B cell (primary cell): ENCODE measurements at regions of chr6 and their contacts with region 1.

Region 1: DNA sequence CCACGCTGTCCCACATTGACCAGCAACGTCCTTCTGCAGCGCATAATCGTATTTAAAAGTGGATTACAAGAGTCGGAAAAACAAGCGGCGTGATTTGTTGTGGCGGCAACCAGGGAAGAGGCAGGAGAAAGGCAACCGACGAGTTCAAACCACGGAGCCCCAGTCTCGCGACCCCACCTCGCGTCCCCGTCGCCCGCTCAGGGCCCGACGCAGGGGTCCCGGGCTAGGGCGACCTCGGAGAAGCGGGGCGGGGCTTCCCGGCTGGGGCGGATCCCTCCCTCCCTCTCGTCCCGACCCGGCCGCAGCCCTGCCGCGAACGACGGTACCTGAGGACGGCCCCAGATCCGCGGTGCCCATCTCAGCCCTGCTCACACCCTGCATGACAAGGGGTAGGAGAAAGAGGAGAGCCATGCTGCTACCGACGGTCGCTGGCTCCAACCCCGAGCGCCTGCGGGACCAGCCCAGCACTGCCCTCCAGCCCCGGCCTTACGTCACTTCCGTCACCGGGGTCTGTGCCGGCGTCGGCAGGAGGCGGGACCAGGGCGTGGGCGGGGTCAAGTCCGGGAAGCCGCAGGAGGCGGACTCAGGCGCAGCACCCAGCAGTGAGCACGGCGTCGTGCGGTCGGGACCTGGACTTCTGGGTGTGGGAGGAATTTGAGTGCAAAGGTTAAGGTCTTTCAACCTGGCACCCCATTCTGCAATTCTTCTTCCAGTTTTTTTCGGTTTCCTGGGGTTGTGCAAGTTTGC is at the start of gene IFNGR1:
- DNase-seq: peak; percentile 96
- ATAC-seq: peak; percentile 86
- H3K4me3 ChIP-seq: peak within 1 kb of the TSS; percentile 76 to 99 (median 88)
- H3K4me3 Mint-ChIP-seq: peak within 1 kb of the TSS; percentile 97
- H3K27ac ChIP-seq: peak within 1 kb of the TSS; percentile 95 to 97
- H3K27ac Mint-ChIP-seq: peak within 1 kb of the TSS; percentile 97
- H3K4me1 ChIP-seq: peaks cover 78 to 81% of the 10 kb centered on the region in 2 donors
- H3K4me1 Mint-ChIP-seq: peaks cover 79% of the 10 kb centered on the region
- H3K27me3 ChIP-seq: no peaks in the 10 kb centered on the region
- H3K27me3 Mint-ChIP-seq: no peaks in the 10 kb centered on the region
- CTCF ChIP-seq: no peak
- total RNA-seq, gene IFNGR1: 48.2 and 51.2 TPM in 2 replicates

Region 2: GRCh38 chr6:136526196-136526930 is 692.7 kb before region 1 on chr6:
- CTCF ChIA-PET with region 1: no interaction called
- POLR2A ChIA-PET with region 1: no interaction called
- intact Hi-C with region 1: no loop called
- DNase-seq: peak; percentile 10
- ATAC-seq: peak; percentile 24
- H3K4me3 ChIP-seq: no peak overlapping the region
- H3K4me3 Mint-ChIP-seq: peak overlapping the region; percentile 4
- H3K27ac ChIP-seq: no peak overlapping the region
- H3K27ac Mint-ChIP-seq: no peak overlapping the region
- H3K4me1 ChIP-seq: peaks cover 12 to 13% of the 10 kb centered on the region in 2 donors
- H3K4me1 Mint-ChIP-seq: peaks cover 16% of the 10 kb centered on the region
- H3K27me3 ChIP-seq: peaks cover 0 to 11% (median 4%) of the 10 kb centered on the region in 4 experiments
- H3K27me3 Mint-ChIP-seq: peaks cover 33% of the 10 kb centered on the region
- CTCF ChIP-seq: no peak

Region 3: GRCh38 chr6:137102851-137103492 is 116.1 kb before region 1 on chr6:
- CTCF ChIA-PET with region 1: interaction called, 5 read pairs
- POLR2A ChIA-PET with region 1: interaction called, 13 read pairs
- intact Hi-C with region 1: loop called (anchors 1 kb)
- DNase-seq: peak; percentile 92
- ATAC-seq: peak; percentile 81
- H3K4me3 ChIP-seq: peak overlapping the region in 4 of 5 experiments; percentile 8 to 49 (median 16)
- H3K4me3 Mint-ChIP-seq: peak overlapping the region; percentile 86
- H3K27ac ChIP-seq: peak overlapping the region; percentile 97
- H3K27ac Mint-ChIP-seq: peak overlapping the region; percentile 99
- H3K4me1 ChIP-seq: peaks cover 89 to 91% of the 10 kb centered on the region in 2 donors
- H3K4me1 Mint-ChIP-seq: peaks cover 87% of the 10 kb centered on the region
- H3K27me3 ChIP-seq: no peaks in the 10 kb centered on the region
- H3K27me3 Mint-ChIP-seq: no peaks in the 10 kb centered on the region
- CTCF ChIP-seq: no peak

Region 4: DNA sequence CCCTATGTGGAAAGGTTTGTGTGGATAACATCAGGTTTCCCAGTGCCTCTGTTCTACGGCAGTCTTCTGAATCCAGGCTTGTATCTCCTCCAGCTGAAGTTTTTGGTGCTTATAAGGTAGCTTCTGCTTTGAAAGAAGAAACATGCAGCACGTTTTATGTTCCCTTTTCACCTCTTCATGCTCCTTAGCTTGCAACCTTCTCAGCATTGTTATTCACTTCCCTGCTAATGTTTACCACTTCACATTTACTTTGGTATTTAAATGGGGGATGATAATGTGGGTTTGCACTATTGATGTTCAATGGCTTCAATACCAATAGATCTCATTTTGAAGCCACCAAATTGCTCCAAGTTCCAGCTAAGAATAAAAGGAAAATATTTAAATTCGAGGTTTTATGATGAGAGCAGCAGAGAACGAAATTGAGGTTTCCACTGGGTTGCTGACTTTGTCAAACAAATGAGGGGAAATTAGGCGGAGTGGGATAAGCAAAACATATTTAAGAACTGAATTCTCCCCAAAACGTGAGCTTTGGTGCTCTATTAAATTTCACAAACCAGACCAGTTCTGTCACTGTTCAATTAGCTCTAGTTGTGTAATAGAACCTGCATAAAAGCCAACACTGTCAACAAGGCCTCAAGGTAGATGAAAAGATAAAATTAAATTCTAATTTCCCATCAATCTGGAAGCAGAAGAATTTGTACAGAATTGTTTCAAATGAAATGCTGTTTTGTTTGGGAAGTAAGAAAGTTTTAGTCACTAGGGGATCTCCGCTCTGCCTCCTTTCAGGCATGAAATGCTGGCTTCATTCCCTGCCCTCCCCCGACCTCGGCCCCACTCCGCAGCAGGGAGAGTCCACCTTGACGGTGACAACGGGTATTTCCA is 47.0 kb before region 1 on chr6:
- CTCF ChIA-PET with region 1: interaction called, 3 read pairs
- POLR2A ChIA-PET with region 1: interaction called, 12 read pairs
- intact Hi-C with region 1: loop called (anchors 5 kb)
- DNase-seq: peak; percentile 78
- ATAC-seq: peak; percentile 66
- H3K4me3 ChIP-seq: peak overlapping the region in 1 of 5 experiments; percentile 31
- H3K4me3 Mint-ChIP-seq: peak overlapping the region; percentile 71
- H3K27ac ChIP-seq: peak overlapping the region; percentile 77 to 87
- H3K27ac Mint-ChIP-seq: peak overlapping the region; percentile 93
- H3K4me1 ChIP-seq: peaks cover 67 to 69% of the 10 kb centered on the region in 2 donors
- H3K4me1 Mint-ChIP-seq: peaks cover 75% of the 10 kb centered on the region
- H3K27me3 ChIP-seq: no peaks in the 10 kb centered on the region
- H3K27me3 Mint-ChIP-seq: no peaks in the 10 kb centered on the region
- CTCF ChIP-seq: no peak

Region 5: GRCh38 chr6:137233911-137234863 is 15.1 kb after region 1 on chr6:
- CTCF ChIA-PET with region 1: interaction called, 8 read pairs
- POLR2A ChIA-PET with region 1: interaction called, 16 read pairs
- intact Hi-C with region 1: loop called (anchors 2 kb)
- DNase-seq: peak; percentile 65
- ATAC-seq: peak; percentile 78
- H3K4me3 ChIP-seq: peak overlapping the region in 2 of 5 experiments; percentile 13 to 42
- H3K4me3 Mint-ChIP-seq: peak overlapping the region; percentile 80
- H3K27ac ChIP-seq: peak overlapping the region; percentile 29 to 58
- H3K27ac Mint-ChIP-seq: peak overlapping the region; percentile 87
- H3K4me1 ChIP-seq: peaks cover 58 to 59% of the 10 kb centered on the region in 2 donors
- H3K4me1 Mint-ChIP-seq: peaks cover 69% of the 10 kb centered on the region
- H3K27me3 ChIP-seq: no peaks in the 10 kb centered on the region
- H3K27me3 Mint-ChIP-seq: no peaks in the 10 kb centered on the region
- CTCF ChIP-seq: no peak